ENCODE measurements at regions of chr7 and their contacts with region 1.

Region 1: DNA sequence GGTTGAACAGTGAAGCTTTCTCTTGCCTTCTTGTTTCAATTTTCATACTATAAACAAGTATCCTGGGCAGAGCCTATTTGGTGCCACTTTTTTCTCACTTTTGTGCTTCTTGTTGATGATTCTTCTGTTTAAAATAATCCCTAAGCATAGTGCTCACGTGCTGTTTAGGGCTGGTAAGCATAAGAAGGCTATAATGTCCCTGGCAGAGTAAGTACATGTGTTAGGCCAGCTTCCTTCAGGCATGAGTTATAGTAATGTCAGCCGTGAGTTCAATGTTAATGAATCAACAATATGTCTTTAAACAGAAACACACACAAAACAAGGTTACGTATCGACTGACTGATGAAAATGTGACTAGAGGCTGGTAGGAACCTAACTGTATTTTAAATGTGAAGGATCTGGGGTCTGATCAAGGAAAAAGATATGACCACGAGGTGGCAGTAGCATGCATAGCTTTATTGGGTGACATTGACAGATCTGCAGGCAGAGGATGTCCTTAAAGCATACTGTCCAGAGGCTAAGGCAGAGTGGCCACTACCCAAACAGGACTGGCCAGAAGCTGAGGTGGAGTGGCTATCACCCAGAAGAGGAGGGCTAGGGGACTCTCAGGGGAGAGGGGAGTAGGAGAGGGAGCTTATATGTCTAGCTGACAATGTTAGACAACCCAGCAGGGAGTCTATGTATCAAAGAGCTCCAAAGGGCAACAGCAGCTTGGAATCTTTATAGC is 113.7 kb downstream of the BRAF start:
- DNase-seq: peak in 1 of 2 donors; percentile 38
- H3K4me3 ChIP-seq: no peak overlapping the region
- H3K27ac ChIP-seq: no peak overlapping the region
- H3K4me1 ChIP-seq: no peaks in the 10 kb centered on the region
- H3K27me3 ChIP-seq: no peaks in the 10 kb centered on the region
- CTCF ChIP-seq: peak; percentile 63 to 68

Region 2: GRCh38 chr7:140397784-140398750 is 412.9 kb before region 1 on chr7 and contains the start of gene SLC37A3:
- intact Hi-C with region 1: loop called (anchors 10 kb)
- DNase-seq: peak; percentile 78 to 90
- H3K4me3 ChIP-seq: peak within 1 kb of the TSS; percentile 85 to 99
- H3K27ac ChIP-seq: peak within 1 kb of the TSS; percentile 88 to 95
- H3K4me1 ChIP-seq: peaks cover 0 to 17% (median 7%) of the 10 kb centered on the region in 4 donors
- H3K27me3 ChIP-seq: peaks cover 0 to 14% of the 10 kb centered on the region in 2 donors
- CTCF ChIP-seq: peak; percentile 22 to 30

Measured in tibial artery (tissue), 4 donors.